Breast epithelium (tissue), 4 donors: ENCODE measurements at regions of chr3 and their contacts with region 1.

Region 1: GRCh38 chr3:133927540-133928066 is 31.9 kb upstream of the RAB6B start:
- DNase-seq: no peak
- H3K4me3 ChIP-seq: peak overlapping the region; percentile 47 to 87 (median 54)
- H3K27ac ChIP-seq: no peak overlapping the region
- H3K4me1 ChIP-seq: peaks cover 0 to 5% of the 10 kb centered on the region in 2 donors
- H3K27me3 ChIP-seq: no peaks in the 10 kb centered on the region
- CTCF ChIP-seq: peak in 2 of 3 donors; percentile 17 to 91
- POLR2A ChIP-seq: no peak

Region 2: DNA sequence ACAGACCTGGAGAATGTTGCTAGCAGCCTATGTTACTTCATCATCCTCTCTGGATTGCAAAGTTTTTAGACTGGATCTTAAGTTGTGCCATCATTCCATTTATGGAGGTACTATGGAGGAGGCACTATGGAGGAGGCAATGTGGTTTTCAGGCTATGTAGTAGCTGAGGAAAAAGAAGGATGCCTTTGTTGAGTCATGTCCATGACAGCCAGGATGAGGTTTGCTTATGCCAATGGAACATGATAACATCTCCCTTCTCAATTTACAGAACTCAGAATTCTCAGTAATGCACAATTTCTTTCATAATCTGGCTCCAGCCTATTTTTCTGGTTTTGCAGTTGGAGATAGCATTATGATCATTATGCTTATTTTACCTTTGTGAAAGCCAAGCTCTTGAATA is 955.3 kb before region 1 on chr3:
- intact Hi-C with region 1: no loop called
- DNase-seq: no peak
- H3K4me3 ChIP-seq: no peak overlapping the region
- H3K27ac ChIP-seq: no peak overlapping the region
- H3K4me1 ChIP-seq: no peaks in the 10 kb centered on the region
- H3K27me3 ChIP-seq: no peaks in the 10 kb centered on the region
- CTCF ChIP-seq: no peak
- POLR2A ChIP-seq: no peak

Region 3: GRCh38 chr3:134201201-134202130 is 273.9 kb after region 1 on chr3:
- intact Hi-C with region 1: loop called (anchors 10 kb)
- DNase-seq: no peak
- H3K4me3 ChIP-seq: no peak overlapping the region
- H3K27ac ChIP-seq: peak overlapping the region in 1 of 2 donors; percentile 64
- H3K4me1 ChIP-seq: no peaks in the 10 kb centered on the region
- H3K27me3 ChIP-seq: no peaks in the 10 kb centered on the region
- CTCF ChIP-seq: no peak
- POLR2A ChIP-seq: no peak